Calu3 (cell line): ENCODE measurements at regions of chr17 and their contacts with region 1.

Region 1: GRCh38 chr17:41060052-41060604 is at the start of gene KRTAP2-3:
- DNase-seq: peak; percentile 90
- H3K4me3 Mint-ChIP-seq: peak within 1 kb of the TSS; percentile 33
- H3K27ac Mint-ChIP-seq: peak within 1 kb of the TSS; percentile 88
- H3K4me1 Mint-ChIP-seq: peaks cover 54% of the 10 kb centered on the region
- H3K27me3 Mint-ChIP-seq: no peaks in the 10 kb centered on the region
- CTCF ChIP-seq: no peak
- total RNA-seq, gene KRTAP2-3: 9.4 and 18.2 TPM in 2 replicates

Region 2: DNA sequence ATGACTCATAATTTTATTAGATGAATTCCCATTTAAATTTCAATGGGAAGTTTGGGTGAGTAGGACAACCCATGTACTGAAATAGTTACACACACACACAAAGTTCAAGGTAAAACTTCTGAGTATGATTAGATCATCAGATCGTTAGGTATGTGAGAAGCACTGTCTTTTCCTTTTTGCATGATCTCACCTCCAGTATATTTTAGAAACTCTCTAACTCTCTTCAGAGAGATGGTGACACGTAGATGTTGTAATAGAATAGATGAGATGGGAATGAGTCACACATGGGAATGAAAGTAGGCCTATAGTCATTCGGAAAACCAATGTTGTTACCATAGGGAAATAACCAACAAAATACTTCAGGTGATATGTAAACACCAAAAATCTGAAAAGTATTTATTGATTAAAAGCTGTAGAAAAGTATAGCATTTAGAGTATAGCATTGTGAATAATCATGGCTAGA is 144.9 kb before region 1 on chr17:
- CTCF ChIA-PET with region 1: interaction called, 6 read pairs
- intact Hi-C with region 1: loop called (anchors 1 kb)
- DNase-seq: no peak
- H3K4me3 Mint-ChIP-seq: peak overlapping the region; percentile 31
- H3K27ac Mint-ChIP-seq: peak overlapping the region; percentile 96
- H3K4me1 Mint-ChIP-seq: peaks cover 84% of the 10 kb centered on the region
- H3K27me3 Mint-ChIP-seq: no peaks in the 10 kb centered on the region
- CTCF ChIP-seq: no peak

Region 3: GRCh38 chr17:40956401-40957254 is 103.5 kb before region 1 on chr17:
- CTCF ChIA-PET with region 1: interaction called, 28 read pairs
- intact Hi-C with region 1: loop called (anchors 1 kb)
- DNase-seq: peak; percentile 88
- H3K4me3 Mint-ChIP-seq: peak overlapping the region; percentile 27
- H3K27ac Mint-ChIP-seq: peak overlapping the region; percentile 94
- H3K4me1 Mint-ChIP-seq: peaks cover 97% of the 10 kb centered on the region
- H3K27me3 Mint-ChIP-seq: no peaks in the 10 kb centered on the region
- CTCF ChIP-seq: no peak

Region 4: DNA sequence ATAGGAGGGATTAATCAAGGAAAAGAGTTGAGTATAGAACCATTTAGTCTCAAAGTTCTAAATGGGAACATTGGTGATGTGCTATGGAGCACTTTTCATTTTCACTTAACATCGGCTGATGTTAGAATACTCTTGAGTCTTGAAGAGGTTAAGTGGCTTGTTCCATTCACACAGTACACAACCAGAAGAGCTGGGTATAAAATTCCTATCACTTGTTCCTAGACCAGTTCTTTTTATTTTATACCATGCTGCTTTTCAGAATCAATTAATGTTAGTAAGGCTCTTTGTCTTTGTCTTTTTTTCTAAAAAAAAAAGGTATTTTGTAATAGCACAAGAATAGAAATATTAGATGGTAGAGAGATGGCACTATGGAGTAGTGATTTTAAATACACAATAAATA is 17.2 kb before region 1 on chr17:
- CTCF ChIA-PET with region 1: interaction called, 9 read pairs
- intact Hi-C with region 1: loop called (anchors 2 kb)
- DNase-seq: no peak
- H3K4me3 Mint-ChIP-seq: no peak overlapping the region
- H3K27ac Mint-ChIP-seq: no peak overlapping the region
- H3K4me1 Mint-ChIP-seq: peaks cover 35% of the 10 kb centered on the region
- H3K27me3 Mint-ChIP-seq: no peaks in the 10 kb centered on the region
- CTCF ChIP-seq: no peak

Region 5: DNA sequence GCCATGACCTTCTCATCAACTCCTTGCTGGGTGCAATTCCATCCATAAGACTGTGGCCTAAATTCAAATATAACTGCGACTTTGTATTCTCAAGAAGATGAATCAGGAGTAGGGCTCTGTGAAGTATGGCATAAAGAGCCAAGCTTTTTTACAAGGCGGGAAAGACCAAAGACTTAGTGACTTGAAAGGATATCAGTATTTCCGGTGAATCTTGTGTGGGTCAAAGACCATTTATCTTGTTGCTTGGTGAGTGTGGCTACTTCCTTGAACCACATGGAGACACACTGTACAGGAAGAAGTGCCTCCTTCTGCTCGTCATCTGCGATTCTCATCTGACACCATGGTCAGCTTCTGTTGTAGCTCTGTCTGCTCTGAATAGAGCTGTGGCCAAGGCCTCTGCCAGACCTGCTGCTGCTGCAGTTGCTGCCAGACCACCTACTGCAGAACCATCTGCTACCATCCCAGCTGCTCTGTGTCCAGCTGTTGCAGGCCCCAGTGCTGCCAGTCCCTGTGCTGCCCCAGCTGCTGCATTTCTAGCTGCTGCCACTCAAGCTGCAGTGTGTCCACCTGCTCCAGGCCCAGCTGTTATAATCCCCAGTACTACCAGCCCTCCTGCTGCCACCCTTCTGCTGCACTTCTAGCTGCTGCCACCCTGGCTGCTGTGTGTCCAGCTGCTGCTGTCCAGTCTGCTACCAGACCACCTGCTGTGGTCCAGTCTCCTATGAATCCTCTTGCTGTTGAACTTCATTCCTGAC is 11.7 kb after region 1 on chr17:
- CTCF ChIA-PET with region 1: interaction called, 10 read pairs
- intact Hi-C with region 1: no loop called
- DNase-seq: no peak
- H3K4me3 Mint-ChIP-seq: no peak overlapping the region
- H3K27ac Mint-ChIP-seq: no peak overlapping the region
- H3K4me1 Mint-ChIP-seq: peaks cover 8% of the 10 kb centered on the region
- H3K27me3 Mint-ChIP-seq: no peaks in the 10 kb centered on the region
- CTCF ChIP-seq: no peak

Region 6: GRCh38 chr17:41322094-41322902 is 262.2 kb after region 1 on chr17:
- CTCF ChIA-PET with region 1: interaction called, 9 read pairs
- intact Hi-C with region 1: loop called (anchors 1 kb)
- DNase-seq: no peak
- H3K4me3 Mint-ChIP-seq: no peak overlapping the region
- H3K27ac Mint-ChIP-seq: no peak overlapping the region
- H3K4me1 Mint-ChIP-seq: peaks cover 23% of the 10 kb centered on the region
- H3K27me3 Mint-ChIP-seq: no peaks in the 10 kb centered on the region
- CTCF ChIP-seq: peak; percentile 80